Common myeloid progenitor, CD34-positive (primary cell): ENCODE measurements at regions of chr6 and their contacts with region 1.

Region 1: GRCh38 chr6:152301764-152302568 is 335.2 kb downstream of the SYNE1 start:
- DNase-seq: peak; percentile 95 to 99 (median 97)
- H3K4me3 ChIP-seq: peak overlapping the region; percentile 79 to 97 (median 88)
- H3K27ac ChIP-seq: peak overlapping the region; percentile 73 to 85
- H3K4me1 ChIP-seq: peaks cover 13 to 34% (median 19%) of the 10 kb centered on the region in 4 experiments
- H3K27me3 ChIP-seq: no peaks in the 10 kb centered on the region

Region 2: DNA sequence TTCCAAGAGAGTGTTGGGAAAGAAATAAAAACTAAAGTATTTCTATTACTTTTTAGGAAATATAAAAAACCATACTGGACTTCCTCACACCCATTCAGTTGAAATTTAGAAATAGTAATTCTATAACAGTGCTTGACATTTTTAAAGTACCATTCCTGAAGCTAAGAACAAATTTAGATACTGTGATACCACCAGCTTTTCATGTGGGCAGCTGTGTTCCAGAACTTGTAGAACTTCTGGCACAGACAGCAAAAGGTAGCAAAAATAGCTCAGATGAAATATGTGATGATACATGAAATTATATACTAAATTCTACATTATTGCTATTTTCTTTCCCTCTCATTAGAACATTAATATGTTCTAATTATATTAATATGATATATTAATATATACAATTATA is 11.3 kb before region 1 on chr6:
- CTCF ChIA-PET with region 1: interaction called, 10 read pairs
- POLR2A ChIA-PET with region 1: no interaction called
- DNase-seq: no peak
- H3K4me3 ChIP-seq: no peak overlapping the region
- H3K27ac ChIP-seq: no peak overlapping the region
- H3K4me1 ChIP-seq: no peaks in the 10 kb centered on the region
- H3K27me3 ChIP-seq: no peaks in the 10 kb centered on the region

Region 3: DNA sequence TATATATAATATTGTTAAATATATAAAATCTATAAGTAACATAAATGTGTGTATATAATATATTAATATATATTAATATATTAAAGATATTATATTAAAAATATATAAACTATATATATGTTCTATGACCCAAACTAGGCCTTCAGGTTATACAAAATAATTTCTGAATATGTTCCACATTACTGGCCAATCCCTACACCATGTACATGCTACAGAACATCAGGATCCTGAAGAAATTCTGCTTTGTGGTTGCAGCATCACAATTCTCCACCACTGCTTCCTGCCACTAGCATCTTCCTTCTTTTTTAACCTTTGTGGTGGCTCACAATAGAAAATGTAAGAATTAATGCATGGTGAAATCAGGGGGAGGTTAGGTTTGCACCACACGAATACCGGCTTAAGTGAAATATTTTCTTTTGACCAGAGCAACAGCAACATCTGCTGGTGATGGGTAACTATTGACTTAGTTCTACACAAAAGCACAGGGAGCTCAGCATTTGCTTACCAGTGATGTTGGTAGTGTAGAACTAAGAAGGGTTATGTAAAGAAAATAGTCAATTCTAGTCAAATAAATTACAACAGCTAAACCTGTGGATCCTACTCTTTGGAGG is 54.6 kb after region 1 on chr6:
- CTCF ChIA-PET with region 1: interaction called, 11 read pairs
- POLR2A ChIA-PET with region 1: no interaction called
- DNase-seq: peak; percentile 68 to 90 (median 89)
- H3K4me3 ChIP-seq: no peak overlapping the region
- H3K27ac ChIP-seq: no peak overlapping the region
- H3K4me1 ChIP-seq: peaks cover 0 to 2% (median 0%) of the 10 kb centered on the region in 4 experiments
- H3K27me3 ChIP-seq: peaks cover 0 to 2% (median 0%) of the 10 kb centered on the region in 5 experiments